H1 (cell line): ENCODE measurements at regions of chr3 and their contacts with region 1.

Region 1: DNA sequence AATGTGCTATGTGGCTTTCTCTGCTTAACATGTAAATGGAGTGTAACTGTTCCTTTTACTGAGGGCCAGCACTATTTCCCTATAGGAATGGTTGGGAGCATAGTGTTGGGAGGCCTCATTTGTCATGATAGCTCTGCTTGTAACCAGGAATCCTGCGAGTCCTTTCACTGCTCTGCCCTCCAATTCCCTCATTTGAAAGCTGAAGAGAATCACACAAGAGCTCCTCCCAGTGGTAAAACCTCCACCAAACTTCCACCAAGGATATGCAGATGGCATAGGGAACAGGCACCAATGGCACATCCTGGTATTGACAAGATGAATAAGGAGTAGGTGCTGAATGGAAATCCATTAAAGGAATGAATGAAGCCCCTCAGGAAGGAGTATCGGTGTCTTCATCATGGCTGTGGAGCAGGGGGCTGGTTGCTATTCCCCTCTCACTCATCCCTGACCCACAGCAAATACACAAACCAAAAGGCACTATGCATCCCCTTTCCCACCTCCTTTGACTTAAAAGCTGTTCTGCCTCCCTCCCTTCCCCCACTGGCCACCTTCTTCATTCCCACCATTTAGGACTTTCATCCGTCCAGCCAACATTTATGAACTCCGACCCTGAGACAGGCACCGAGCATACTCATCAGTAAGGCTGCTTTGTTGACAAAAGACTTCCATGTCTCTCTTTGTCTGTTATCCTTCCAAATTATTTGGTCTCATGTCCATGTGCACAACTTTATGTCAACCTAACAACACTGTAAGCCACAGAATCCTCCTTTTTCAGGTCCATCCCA is 560.8 kb downstream of the FOXP1 start:
- DNase-seq: peak in 1 of 2 experiments; percentile 52
- H3K4me3 ChIP-seq: no peak overlapping the region
- H3K27ac ChIP-seq: no peak overlapping the region
- H3K4me1 ChIP-seq: peaks cover 3 to 12% (median 6%) of the 10 kb centered on the region in 4 experiments; a peak in 6 of 7 replicates
- H3K27me3 ChIP-seq: no peaks in the 10 kb centered on the region
- CTCF ChIP-seq: peak in 2 of 3 experiments; percentile 60 to 72; a peak in 3 of 4 replicates
- EP300 ChIP-seq: no peak
- POLR2A ChIP-seq: no peak
- RAD21 ChIP-seq: peak; percentile 68 to 79

Region 2: GRCh38 chr3:71039332-71039731 is 16.6 kb after region 1 on chr3:
- CTCF ChIA-PET with region 1: interaction called, 25 read pairs
- POLR2A ChIA-PET with region 1: no interaction called
- DNase-seq: no peak
- H3K4me3 ChIP-seq: no peak overlapping the region
- H3K27ac ChIP-seq: no peak overlapping the region
- H3K4me1 ChIP-seq: no peaks in the 10 kb centered on the region
- H3K27me3 ChIP-seq: no peaks in the 10 kb centered on the region; a peak in 1 of 7 replicates
- CTCF ChIP-seq: no peak
- EP300 ChIP-seq: no peak
- POLR2A ChIP-seq: no peak
- RAD21 ChIP-seq: no peak

Region 3: GRCh38 chr3:71045917-71046282 is 23.2 kb after region 1 on chr3:
- CTCF ChIA-PET with region 1: interaction called, 11 read pairs
- POLR2A ChIA-PET with region 1: no interaction called
- DNase-seq: no peak
- H3K4me3 ChIP-seq: no peak overlapping the region
- H3K27ac ChIP-seq: no peak overlapping the region
- H3K4me1 ChIP-seq: peaks cover 14 to 41% (median 31%) of the 10 kb centered on the region in 4 experiments; a peak in 6 of 7 replicates
- H3K27me3 ChIP-seq: no peaks in the 10 kb centered on the region
- CTCF ChIP-seq: no peak
- EP300 ChIP-seq: no peak
- POLR2A ChIP-seq: no peak
- RAD21 ChIP-seq: no peak